CD4-positive, alpha-beta memory T cell (primary cell): ENCODE measurements at regions of chr6 and their contacts with region 1.

Region 1: GRCh38 chr6:136226027-136226673 is 24.0 kb downstream of the MTFR2 start:
- DNase-seq: peak in 4 of 5 donors; percentile 53 to 57 (median 55)
- H3K4me3 ChIP-seq: peak overlapping the region in 1 of 2 donors; percentile 29
- H3K4me3 Mint-ChIP-seq: peak overlapping the region in 7 of 8 donors; percentile 49 to 77 (median 66)
- H3K27ac ChIP-seq: no peak overlapping the region
- H3K27ac Mint-ChIP-seq: peak overlapping the region in 2 of 7 donors; percentile 2 to 72
- H3K4me1 ChIP-seq: no peaks in the 10 kb centered on the region
- H3K4me1 Mint-ChIP-seq: peaks cover 3 to 10% (median 4%) of the 10 kb centered on the region in 4 donors
- H3K27me3 ChIP-seq: no peaks in the 10 kb centered on the region
- H3K27me3 Mint-ChIP-seq: no peaks in the 10 kb centered on the region

Region 2: GRCh38 chr6:135451693-135452092 is 774.5 kb before region 1 on chr6:
- CTCF ChIA-PET with region 1: interaction called, 40 read pairs
- POLR2A ChIA-PET with region 1: no interaction called
- intact Hi-C with region 1: loop called (anchors 1 kb)
- DNase-seq: peak in 4 of 5 donors; percentile 33 to 51 (median 42)
- H3K4me3 ChIP-seq: no peak overlapping the region
- H3K4me3 Mint-ChIP-seq: no peak overlapping the region
- H3K27ac ChIP-seq: no peak overlapping the region
- H3K27ac Mint-ChIP-seq: no peak overlapping the region
- H3K4me1 ChIP-seq: no peaks in the 10 kb centered on the region
- H3K4me1 Mint-ChIP-seq: no peaks in the 10 kb centered on the region
- H3K27me3 ChIP-seq: no peaks in the 10 kb centered on the region
- H3K27me3 Mint-ChIP-seq: no peaks in the 10 kb centered on the region

Region 3: GRCh38 chr6:135506270-135506997 is 719.7 kb before region 1 on chr6:
- CTCF ChIA-PET with region 1: interaction called, 41 read pairs
- POLR2A ChIA-PET with region 1: interaction called, 5 read pairs
- intact Hi-C with region 1: loop called (anchors 1 kb)
- DNase-seq: peak; percentile 39 to 46 (median 40)
- H3K4me3 ChIP-seq: no peak overlapping the region
- H3K4me3 Mint-ChIP-seq: peak overlapping the region in 3 of 8 donors; percentile 13 to 39 (median 20)
- H3K27ac ChIP-seq: no peak overlapping the region
- H3K27ac Mint-ChIP-seq: no peak overlapping the region
- H3K4me1 ChIP-seq: no peaks in the 10 kb centered on the region
- H3K4me1 Mint-ChIP-seq: peaks cover 0 to 5% (median under 1%) of the 10 kb centered on the region in 4 donors
- H3K27me3 ChIP-seq: no peaks in the 10 kb centered on the region
- H3K27me3 Mint-ChIP-seq: no peaks in the 10 kb centered on the region

Region 4: GRCh38 chr6:135675862-135676261 is 550.3 kb before region 1 on chr6:
- CTCF ChIA-PET with region 1: interaction called, 39 read pairs
- POLR2A ChIA-PET with region 1: no interaction called
- intact Hi-C with region 1: loop called (anchors 1 kb)
- DNase-seq: peak; percentile 36 to 50 (median 48)
- H3K4me3 ChIP-seq: no peak overlapping the region
- H3K4me3 Mint-ChIP-seq: no peak overlapping the region
- H3K27ac ChIP-seq: no peak overlapping the region
- H3K27ac Mint-ChIP-seq: peak overlapping the region in 1 of 7 donors; percentile 14
- H3K4me1 ChIP-seq: no peaks in the 10 kb centered on the region
- H3K4me1 Mint-ChIP-seq: no peaks in the 10 kb centered on the region
- H3K27me3 ChIP-seq: no peaks in the 10 kb centered on the region
- H3K27me3 Mint-ChIP-seq: no peaks in the 10 kb centered on the region

Region 5: GRCh38 chr6:136213012-136213539 is 13.1 kb before region 1 on chr6:
- CTCF ChIA-PET with region 1: interaction called, 25 read pairs
- POLR2A ChIA-PET with region 1: no interaction called
- intact Hi-C with region 1: no loop called
- DNase-seq: no peak
- H3K4me3 ChIP-seq: no peak overlapping the region
- H3K4me3 Mint-ChIP-seq: no peak overlapping the region
- H3K27ac ChIP-seq: no peak overlapping the region
- H3K27ac Mint-ChIP-seq: no peak overlapping the region
- H3K4me1 ChIP-seq: no peaks in the 10 kb centered on the region
- H3K4me1 Mint-ChIP-seq: no peaks in the 10 kb centered on the region
- H3K27me3 ChIP-seq: no peaks in the 10 kb centered on the region
- H3K27me3 Mint-ChIP-seq: peaks cover 0 to 3% of the 10 kb centered on the region in 2 donors

Region 6: GRCh38 chr6:136317021-136317694 is 91.0 kb after region 1 on chr6:
- CTCF ChIA-PET with region 1: interaction called, 19 read pairs
- POLR2A ChIA-PET with region 1: no interaction called
- intact Hi-C with region 1: loop called (anchors 1 kb)
- DNase-seq: peak; percentile 68 to 72 (median 69)
- H3K4me3 ChIP-seq: no peak overlapping the region
- H3K4me3 Mint-ChIP-seq: no peak overlapping the region
- H3K27ac ChIP-seq: no peak overlapping the region
- H3K27ac Mint-ChIP-seq: peak overlapping the region in 2 of 7 donors; percentile 35 to 77
- H3K4me1 ChIP-seq: no peaks in the 10 kb centered on the region
- H3K4me1 Mint-ChIP-seq: peaks cover 0 to 4% (median 1%) of the 10 kb centered on the region in 4 donors
- H3K27me3 ChIP-seq: no peaks in the 10 kb centered on the region
- H3K27me3 Mint-ChIP-seq: peaks cover 0 to 5% of the 10 kb centered on the region in 2 donors

Region 7: GRCh38 chr6:136719280-136720044 is 493.3 kb after region 1 on chr6:
- CTCF ChIA-PET with region 1: no interaction called
- POLR2A ChIA-PET with region 1: no interaction called
- intact Hi-C with region 1: no loop called
- DNase-seq: no peak
- H3K4me3 ChIP-seq: no peak overlapping the region
- H3K4me3 Mint-ChIP-seq: peak overlapping the region; percentile 1 to 88 (median 83)
- H3K27ac ChIP-seq: no peak overlapping the region
- H3K27ac Mint-ChIP-seq: peak overlapping the region in 6 of 7 donors; percentile 13 to 90 (median 62)
- H3K4me1 ChIP-seq: peaks cover 47% of the 10 kb centered on the region
- H3K4me1 Mint-ChIP-seq: peaks cover 39 to 51% (median 48%) of the 10 kb centered on the region in 4 donors
- H3K27me3 ChIP-seq: no peaks in the 10 kb centered on the region
- H3K27me3 Mint-ChIP-seq: no peaks in the 10 kb centered on the region